IMR-90 (cell line): ENCODE measurements at regions of chr12 and their contacts with region 1.

Region 1: DNA sequence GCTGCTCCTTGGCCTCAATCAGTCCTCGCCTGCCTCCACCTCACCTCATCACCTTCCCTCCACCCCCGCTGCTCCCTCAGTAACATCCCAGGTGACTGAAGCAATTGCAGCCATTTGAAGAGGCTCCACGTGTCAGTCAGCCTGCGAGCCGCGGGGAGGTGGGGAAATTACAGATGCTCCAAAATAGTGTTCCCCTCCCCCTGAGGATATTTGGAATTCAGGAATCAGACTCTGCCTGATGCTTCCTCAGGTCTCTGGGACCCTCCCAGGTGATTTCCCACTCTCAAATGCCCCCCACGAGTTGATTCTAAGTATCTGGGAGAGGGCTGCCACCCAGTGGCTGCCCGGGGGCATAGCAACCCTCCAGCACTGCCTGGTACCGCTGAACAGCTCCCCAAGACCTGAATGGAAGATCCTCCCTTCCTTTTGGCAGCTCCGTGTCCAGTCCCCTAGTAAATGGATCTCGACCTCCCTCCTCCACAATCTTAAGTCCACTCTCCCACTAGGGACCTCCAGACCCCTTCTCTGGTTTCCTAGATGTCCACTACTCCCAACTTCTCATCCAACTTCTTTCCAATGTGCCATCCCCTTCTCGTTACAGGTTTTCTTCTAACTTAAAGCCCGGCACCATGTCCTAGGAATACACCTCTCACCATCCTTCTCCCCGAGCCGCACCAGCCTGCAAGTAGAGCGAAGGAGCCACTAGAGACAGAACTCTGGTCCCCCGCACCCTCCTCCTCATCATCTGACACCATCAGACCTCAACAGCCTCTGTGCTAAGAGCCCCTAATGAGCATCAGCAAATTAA is 1.4 kb upstream of the ASIC1 start:
- DNase-seq: peak; percentile 46
- ATAC-seq: peak; percentile 46
- H3K4me3 ChIP-seq: no peak overlapping the region
- H3K27ac ChIP-seq: no peak overlapping the region
- H3K4me1 ChIP-seq: peaks cover 7% of the 10 kb centered on the region
- H3K27me3 ChIP-seq: peaks cover 40% of the 10 kb centered on the region
- CTCF ChIP-seq: peak; percentile 97
- POLR2A ChIP-seq: no peak
- RAD21 ChIP-seq: peak; percentile 88

Region 2: DNA sequence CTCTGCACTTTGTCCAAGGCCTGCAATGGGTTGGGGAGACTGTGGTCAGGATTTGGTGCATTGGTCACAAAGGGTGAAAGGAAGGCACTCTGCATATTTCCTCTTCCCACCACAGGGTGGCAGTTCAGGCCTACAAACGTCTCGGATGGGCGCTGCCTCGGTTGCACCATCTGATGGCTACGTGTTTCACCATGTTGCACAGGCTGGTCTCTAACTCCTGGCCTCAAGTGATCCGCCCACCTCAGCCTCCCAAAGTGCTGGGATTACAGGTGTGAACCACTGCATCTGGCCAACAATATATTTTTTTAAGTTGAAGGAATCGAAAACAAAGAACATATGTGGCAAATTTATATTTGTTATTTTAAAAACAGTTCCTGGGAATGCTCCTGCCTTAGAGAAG is 279.6 kb before region 1 on chr12:
- CTCF ChIA-PET with region 1: no interaction called
- POLR2A ChIA-PET with region 1: no interaction called
- dilution Hi-C with region 1: no loop called
- in situ Hi-C with region 1: no loop called
- intact Hi-C with region 1: loop called (anchors 2 kb)
- DNase-seq: peak; percentile 79
- ATAC-seq: peak; percentile 97
- H3K4me3 ChIP-seq: no peak overlapping the region
- H3K27ac ChIP-seq: no peak overlapping the region
- H3K4me1 ChIP-seq: no peaks in the 10 kb centered on the region
- H3K27me3 ChIP-seq: peaks cover 4% of the 10 kb centered on the region; the same call in 1 of the 2 replicates
- CTCF ChIP-seq: peak; percentile 86
- POLR2A ChIP-seq: no peak
- RAD21 ChIP-seq: peak; percentile 93

Region 3: GRCh38 chr12:49967042-49967776 is 88.8 kb before region 1 on chr12:
- CTCF ChIA-PET with region 1: interaction called, 17 read pairs
- POLR2A ChIA-PET with region 1: no interaction called
- dilution Hi-C with region 1: no loop called
- in situ Hi-C with region 1: loop called (anchors 5 kb)
- intact Hi-C with region 1: loop called (anchors 1 kb)
- DNase-seq: peak; percentile 78
- ATAC-seq: peak; percentile 94
- H3K4me3 ChIP-seq: peak overlapping the region; percentile 28
- H3K27ac ChIP-seq: no peak overlapping the region
- H3K4me1 ChIP-seq: no peaks in the 10 kb centered on the region
- H3K27me3 ChIP-seq: peaks cover 86% of the 10 kb centered on the region
- CTCF ChIP-seq: peak; percentile 92
- POLR2A ChIP-seq: 0 out of 2 replicates have a peak, but pooled peaks have one; percentile 35
- RAD21 ChIP-seq: peak; percentile 94

Region 4: DNA sequence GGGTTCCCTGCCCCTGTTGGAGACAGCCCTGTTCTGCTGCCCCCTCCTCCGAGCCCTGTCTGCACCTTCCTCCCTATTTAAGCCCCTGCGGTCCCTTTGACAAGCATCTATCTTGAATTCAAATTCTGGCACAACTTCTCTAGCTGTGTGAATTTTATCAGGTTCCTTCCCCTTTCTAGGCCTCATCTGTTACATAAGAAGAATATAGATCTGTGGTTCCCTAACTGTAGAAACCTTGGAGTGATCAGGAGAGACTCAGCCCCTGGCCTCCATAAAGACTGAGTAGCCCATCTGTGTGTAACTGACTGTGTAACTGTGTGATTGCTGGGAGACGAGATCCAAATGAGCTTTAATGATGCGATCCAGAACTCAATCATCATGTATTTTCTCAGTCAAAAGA is 17.7 kb before region 1 on chr12:
- CTCF ChIA-PET with region 1: interaction called, 12 read pairs
- POLR2A ChIA-PET with region 1: no interaction called
- dilution Hi-C with region 1: no loop called
- in situ Hi-C with region 1: no loop called
- intact Hi-C with region 1: no loop called
- DNase-seq: no peak
- ATAC-seq: no peak
- H3K4me3 ChIP-seq: no peak overlapping the region
- H3K27ac ChIP-seq: no peak overlapping the region
- H3K4me1 ChIP-seq: no peaks in the 10 kb centered on the region
- H3K27me3 ChIP-seq: peaks cover 10% of the 10 kb centered on the region
- CTCF ChIP-seq: no peak
- POLR2A ChIP-seq: no peak
- RAD21 ChIP-seq: no peak

Region 5: GRCh38 chr12:50074936-50075807 is 19.1 kb after region 1 on chr12:
- CTCF ChIA-PET with region 1: interaction called, 15 read pairs
- POLR2A ChIA-PET with region 1: no interaction called
- dilution Hi-C with region 1: no loop called
- in situ Hi-C with region 1: no loop called
- intact Hi-C with region 1: no loop called
- DNase-seq: peak; percentile 76
- ATAC-seq: peak; percentile 98
- H3K4me3 ChIP-seq: no peak overlapping the region
- H3K27ac ChIP-seq: no peak overlapping the region
- H3K4me1 ChIP-seq: peaks cover 3% of the 10 kb centered on the region; the same call in 1 of the 2 replicates
- H3K27me3 ChIP-seq: no peaks in the 10 kb centered on the region
- CTCF ChIP-seq: peak; percentile 94
- POLR2A ChIP-seq: no peak
- RAD21 ChIP-seq: peak; percentile 95